Mammary epithelial cell (primary cell): ENCODE measurements at regions of chr1 and their contacts with region 1.

Region 1: GRCh38 chr1:170929835-170930554 is 5.3 kb upstream of the MROH9 start:
- DNase-seq: peak; percentile 54
- H3K4me3 ChIP-seq: no peak overlapping the region
- H3K27ac ChIP-seq: peak overlapping the region; percentile 62
- H3K4me1 ChIP-seq: peaks cover 18% of the 10 kb centered on the region
- H3K27me3 ChIP-seq: no peaks in the 10 kb centered on the region
- CTCF ChIP-seq: peak; percentile 70 to 79

Region 2: GRCh38 chr1:170010443-170010842 is 919.6 kb before region 1 on chr1:
- CTCF ChIA-PET with region 1: no interaction called
- dilution Hi-C with region 1: no loop called
- in situ Hi-C with region 1: no loop called
- intact Hi-C with region 1: loop called (anchors 2 kb)
- DNase-seq: no peak
- H3K4me3 ChIP-seq: no peak overlapping the region
- H3K27ac ChIP-seq: no peak overlapping the region
- H3K4me1 ChIP-seq: no peaks in the 10 kb centered on the region
- H3K27me3 ChIP-seq: no peaks in the 10 kb centered on the region
- CTCF ChIP-seq: peak; percentile 6 to 48

Region 3: DNA sequence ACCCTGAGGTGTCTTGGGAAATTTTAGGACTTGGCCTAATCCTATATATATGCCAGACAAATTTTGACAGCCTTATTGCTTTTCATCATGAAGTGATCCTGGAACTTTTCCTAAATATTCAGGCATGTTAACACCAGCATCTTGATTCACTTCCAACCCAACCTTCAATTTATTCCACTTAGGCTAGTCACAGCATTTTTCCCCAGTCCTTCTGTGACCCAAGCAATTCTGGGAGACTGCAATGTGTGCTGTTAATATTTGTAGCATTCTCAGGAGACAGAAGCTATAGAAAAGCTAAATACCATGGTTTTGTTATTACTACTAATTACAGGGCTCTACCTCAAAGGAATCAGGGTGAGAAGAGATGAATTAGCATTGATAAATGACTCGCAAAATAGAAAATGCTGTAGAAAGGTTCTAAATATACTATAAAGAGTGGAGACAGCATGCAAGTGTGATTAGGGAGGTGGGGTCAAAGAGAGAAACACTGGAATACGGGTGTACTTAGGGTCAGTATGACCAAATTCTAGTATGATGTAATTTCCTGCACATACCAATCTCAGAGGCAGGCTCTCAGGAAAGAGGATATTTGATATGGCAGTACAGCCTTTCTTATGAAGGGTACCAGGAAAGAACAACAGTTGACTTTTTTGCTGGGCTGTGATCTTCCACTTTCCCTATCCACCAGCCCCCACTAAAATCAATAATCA is 237.0 kb before region 1 on chr1:
- CTCF ChIA-PET with region 1: interaction called, 4 read pairs
- dilution Hi-C with region 1: no loop called
- in situ Hi-C with region 1: loop called in 1 of 2 experiments (anchors 10 kb)
- intact Hi-C with region 1: loop called (anchors 1 kb)
- DNase-seq: peak; percentile 2
- H3K4me3 ChIP-seq: no peak overlapping the region
- H3K27ac ChIP-seq: no peak overlapping the region
- H3K4me1 ChIP-seq: peaks cover 11% of the 10 kb centered on the region
- H3K27me3 ChIP-seq: no peaks in the 10 kb centered on the region
- CTCF ChIP-seq: no peak

Region 4: DNA sequence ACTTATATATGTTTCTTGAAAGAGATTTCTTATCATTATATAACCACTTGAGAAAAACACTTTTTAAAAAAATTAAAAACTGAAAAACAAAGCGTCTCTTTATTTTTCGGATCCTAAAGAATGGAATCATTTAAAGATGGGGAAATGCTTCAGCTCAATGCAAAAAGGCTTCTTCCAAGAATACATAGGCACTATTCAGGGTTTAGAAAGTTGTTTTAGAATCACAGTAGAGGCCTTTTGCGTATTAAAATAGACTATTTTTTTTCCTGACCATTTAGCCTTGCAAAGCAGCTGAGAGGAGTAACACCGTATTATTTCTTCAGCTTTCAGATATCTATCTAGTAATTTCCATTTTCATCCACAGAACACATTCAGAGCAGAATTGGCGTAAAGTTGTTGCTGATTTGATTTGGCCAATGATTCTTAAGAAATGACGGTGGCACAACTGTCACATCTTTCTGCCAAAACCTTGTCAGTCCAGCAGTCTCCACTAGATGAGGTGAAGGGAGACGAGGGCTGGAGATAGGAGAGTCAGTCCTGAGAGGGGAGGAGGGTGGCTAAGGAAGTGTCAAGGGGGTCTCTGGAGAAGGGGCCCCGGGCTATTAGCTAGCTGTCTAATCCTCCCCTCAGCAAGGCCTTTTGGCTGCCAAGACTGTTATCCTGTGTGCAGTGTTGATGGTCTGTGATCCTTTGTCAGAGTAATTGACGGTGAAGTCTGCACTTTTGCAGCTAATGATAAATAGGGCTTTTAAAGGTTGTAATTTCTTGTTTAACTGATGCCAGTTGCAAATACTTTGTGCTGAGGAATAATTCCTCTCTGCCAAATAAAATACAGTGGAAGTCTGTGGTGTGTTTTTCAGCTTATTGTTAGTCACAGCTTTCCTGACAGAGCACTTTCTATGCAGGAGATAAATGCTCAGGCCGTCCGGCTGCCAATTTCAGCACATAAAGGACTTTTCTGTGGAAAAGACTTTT is 231.4 kb before region 1 on chr1:
- CTCF ChIA-PET with region 1: no interaction called
- dilution Hi-C with region 1: no loop called
- in situ Hi-C with region 1: loop called in 1 of 2 experiments (anchors 10 kb)
- intact Hi-C with region 1: no loop called
- DNase-seq: no peak
- H3K4me3 ChIP-seq: no peak overlapping the region
- H3K27ac ChIP-seq: no peak overlapping the region
- H3K4me1 ChIP-seq: peaks cover 6% of the 10 kb centered on the region
- H3K27me3 ChIP-seq: no peaks in the 10 kb centered on the region
- CTCF ChIP-seq: no peak

Region 5: GRCh38 chr1:170765712-170766330 is 164.2 kb before region 1 on chr1:
- CTCF ChIA-PET with region 1: no interaction called
- dilution Hi-C with region 1: no loop called
- in situ Hi-C with region 1: no loop called
- intact Hi-C with region 1: loop called (anchors 1 kb)
- DNase-seq: peak; percentile 8
- H3K4me3 ChIP-seq: no peak overlapping the region
- H3K27ac ChIP-seq: no peak overlapping the region
- H3K4me1 ChIP-seq: no peaks in the 10 kb centered on the region
- H3K27me3 ChIP-seq: no peaks in the 10 kb centered on the region
- CTCF ChIP-seq: peak; percentile 51 to 66

Region 6: GRCh38 chr1:170790175-170790574 is 139.8 kb before region 1 on chr1:
- CTCF ChIA-PET with region 1: interaction called, 3 read pairs
- dilution Hi-C with region 1: no loop called
- in situ Hi-C with region 1: no loop called
- intact Hi-C with region 1: loop called (anchors 10 kb)
- DNase-seq: no peak
- H3K4me3 ChIP-seq: no peak overlapping the region
- H3K27ac ChIP-seq: no peak overlapping the region
- H3K4me1 ChIP-seq: no peaks in the 10 kb centered on the region
- H3K27me3 ChIP-seq: no peaks in the 10 kb centered on the region
- CTCF ChIP-seq: no peak

Region 7: GRCh38 chr1:170893655-170894297 is 36.2 kb before region 1 on chr1:
- CTCF ChIA-PET with region 1: no interaction called
- dilution Hi-C with region 1: no loop called
- in situ Hi-C with region 1: no loop called
- intact Hi-C with region 1: no loop called
- DNase-seq: no peak
- H3K4me3 ChIP-seq: no peak overlapping the region
- H3K27ac ChIP-seq: no peak overlapping the region
- H3K4me1 ChIP-seq: no peaks in the 10 kb centered on the region
- H3K27me3 ChIP-seq: no peaks in the 10 kb centered on the region
- CTCF ChIP-seq: no peak

Region 8: DNA sequence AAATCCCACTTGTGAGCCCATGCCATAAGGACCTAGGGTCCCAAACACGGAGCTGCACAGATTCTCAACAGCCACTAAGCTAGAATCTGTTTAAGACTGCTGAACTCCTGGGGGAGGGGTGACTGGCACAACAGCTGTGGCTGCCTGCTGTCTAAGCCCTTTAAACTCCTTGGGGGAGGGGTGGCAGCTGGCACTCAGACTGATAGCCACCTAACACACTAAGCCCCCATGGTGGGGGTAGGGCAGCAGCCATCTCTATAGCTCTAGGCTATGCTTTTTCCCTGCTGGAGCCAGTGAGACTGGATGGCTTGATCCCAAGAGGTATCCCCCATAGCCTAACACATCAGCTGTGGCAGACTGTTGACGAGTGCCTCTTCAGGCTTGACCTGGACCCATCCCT is 87.4 kb after region 1 on chr1:
- CTCF ChIA-PET with region 1: no interaction called
- dilution Hi-C with region 1: no loop called
- in situ Hi-C with region 1: no loop called
- intact Hi-C with region 1: no loop called
- DNase-seq: no peak
- H3K4me3 ChIP-seq: no peak overlapping the region
- H3K27ac ChIP-seq: no peak overlapping the region
- H3K4me1 ChIP-seq: no peaks in the 10 kb centered on the region
- H3K27me3 ChIP-seq: no peaks in the 10 kb centered on the region
- CTCF ChIP-seq: no peak

Region 9: GRCh38 chr1:172054172-172054571 is 1124.2 kb after region 1 on chr1:
- CTCF ChIA-PET with region 1: no interaction called
- dilution Hi-C with region 1: no loop called
- in situ Hi-C with region 1: no loop called
- intact Hi-C with region 1: no loop called
- DNase-seq: no peak
- H3K4me3 ChIP-seq: no peak overlapping the region
- H3K27ac ChIP-seq: no peak overlapping the region
- H3K4me1 ChIP-seq: no peaks in the 10 kb centered on the region
- H3K27me3 ChIP-seq: no peaks in the 10 kb centered on the region
- CTCF ChIP-seq: no peak